A673 (cell line): ENCODE measurements at regions of chr11 and their contacts with region 1.

Region 1: GRCh38 chr11:32792948-32793475 is 1.4 kb downstream of the CCDC73 start:
- DNase-seq: peak; percentile 84
- H3K4me3 ChIP-seq: peak overlapping the region; percentile 13
- H3K27ac ChIP-seq: no peak overlapping the region
- H3K4me1 ChIP-seq: no peaks in the 10 kb centered on the region
- H3K27me3 ChIP-seq: peaks cover 36% of the 10 kb centered on the region
- CTCF ChIP-seq: peak; percentile 98

Region 2: GRCh38 chr11:32044158-32044863 is 748.7 kb before region 1 on chr11:
- CTCF ChIA-PET with region 1: no interaction called
- POLR2A ChIA-PET with region 1: no interaction called
- intact Hi-C with region 1: no loop called
- DNase-seq: peak; percentile 95
- H3K4me3 ChIP-seq: no peak overlapping the region
- H3K27ac ChIP-seq: no peak overlapping the region
- H3K4me1 ChIP-seq: peaks cover 16% of the 10 kb centered on the region
- H3K27me3 ChIP-seq: peaks cover 60% of the 10 kb centered on the region
- CTCF ChIP-seq: no peak

Region 3: GRCh38 chr11:32374261-32374711 is 418.7 kb before region 1 on chr11:
- CTCF ChIA-PET with region 1: interaction called, 4 read pairs
- POLR2A ChIA-PET with region 1: no interaction called
- intact Hi-C with region 1: loop called (anchors 1 kb)
- DNase-seq: peak; percentile 98
- H3K4me3 ChIP-seq: no peak overlapping the region
- H3K27ac ChIP-seq: no peak overlapping the region
- H3K4me1 ChIP-seq: no peaks in the 10 kb centered on the region
- H3K27me3 ChIP-seq: no peaks in the 10 kb centered on the region
- CTCF ChIP-seq: peak; percentile 100; the same call in 1 of the 2 replicates

Region 4: DNA sequence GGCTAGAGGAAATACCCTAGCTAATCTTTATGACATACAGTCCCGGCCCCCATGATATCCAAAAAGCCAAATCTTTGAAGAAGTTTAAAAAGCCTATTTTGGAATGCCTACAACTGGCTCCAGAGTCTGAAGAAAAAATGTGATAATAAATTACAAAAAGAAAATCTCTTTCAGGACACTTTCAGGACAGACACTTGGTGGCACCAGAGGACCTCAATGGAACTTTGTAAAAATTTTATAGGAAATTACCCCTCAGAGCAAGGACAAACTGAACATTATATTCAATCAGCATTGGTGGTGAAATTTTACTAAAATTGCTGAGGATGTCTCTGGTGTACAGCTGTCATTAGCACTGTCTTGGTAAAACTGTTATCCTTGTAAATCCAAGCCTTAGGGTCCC is 79.5 kb before region 1 on chr11:
- CTCF ChIA-PET with region 1: no interaction called
- POLR2A ChIA-PET with region 1: no interaction called
- intact Hi-C with region 1: loop called (anchors 1 kb)
- DNase-seq: peak; percentile 52
- H3K4me3 ChIP-seq: no peak overlapping the region
- H3K27ac ChIP-seq: no peak overlapping the region
- H3K4me1 ChIP-seq: no peaks in the 10 kb centered on the region
- H3K27me3 ChIP-seq: peaks cover 8% of the 10 kb centered on the region
- CTCF ChIP-seq: peak; percentile 75

Region 5: GRCh38 chr11:32751381-32751780 is 41.6 kb before region 1 on chr11:
- CTCF ChIA-PET with region 1: no interaction called
- POLR2A ChIA-PET with region 1: no interaction called
- intact Hi-C with region 1: loop called (anchors 2 kb)
- DNase-seq: no peak
- H3K4me3 ChIP-seq: no peak overlapping the region
- H3K27ac ChIP-seq: no peak overlapping the region
- H3K4me1 ChIP-seq: no peaks in the 10 kb centered on the region
- H3K27me3 ChIP-seq: peaks cover 8% of the 10 kb centered on the region
- CTCF ChIP-seq: no peak

Region 6: DNA sequence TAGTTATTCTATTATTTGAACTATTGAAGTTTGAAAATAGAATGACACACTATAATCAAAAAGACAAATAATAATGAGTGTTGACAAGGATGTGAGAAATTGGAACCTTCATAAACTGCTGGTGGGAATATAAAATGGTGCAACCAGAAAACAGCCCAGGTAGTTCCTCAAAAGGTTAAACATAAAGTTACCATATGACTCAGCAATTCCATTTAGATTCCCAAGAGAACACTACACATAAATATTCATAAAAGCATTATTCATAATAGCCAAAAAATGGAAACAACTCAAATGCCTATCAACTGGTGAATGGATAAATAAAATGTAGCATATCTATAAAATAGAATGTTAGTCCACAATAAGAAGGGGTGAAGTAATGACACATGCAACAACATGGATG is 20.3 kb before region 1 on chr11:
- CTCF ChIA-PET with region 1: no interaction called
- POLR2A ChIA-PET with region 1: no interaction called
- intact Hi-C with region 1: no loop called
- DNase-seq: no peak
- H3K4me3 ChIP-seq: no peak overlapping the region
- H3K27ac ChIP-seq: no peak overlapping the region
- H3K4me1 ChIP-seq: no peaks in the 10 kb centered on the region
- H3K27me3 ChIP-seq: no peaks in the 10 kb centered on the region
- CTCF ChIP-seq: no peak

Region 7: GRCh38 chr11:33065445-33066178 is 272.6 kb after region 1 on chr11:
- CTCF ChIA-PET with region 1: no interaction called
- POLR2A ChIA-PET with region 1: no interaction called
- intact Hi-C with region 1: no loop called
- DNase-seq: peak; percentile 95
- H3K4me3 ChIP-seq: no peak overlapping the region
- H3K27ac ChIP-seq: no peak overlapping the region
- H3K4me1 ChIP-seq: peaks cover 30% of the 10 kb centered on the region
- H3K27me3 ChIP-seq: no peaks in the 10 kb centered on the region
- CTCF ChIP-seq: peak; percentile 100